HEK293 (cell line): ENCODE measurements at regions of chr1 and their contacts with region 1.

Region 1: DNA sequence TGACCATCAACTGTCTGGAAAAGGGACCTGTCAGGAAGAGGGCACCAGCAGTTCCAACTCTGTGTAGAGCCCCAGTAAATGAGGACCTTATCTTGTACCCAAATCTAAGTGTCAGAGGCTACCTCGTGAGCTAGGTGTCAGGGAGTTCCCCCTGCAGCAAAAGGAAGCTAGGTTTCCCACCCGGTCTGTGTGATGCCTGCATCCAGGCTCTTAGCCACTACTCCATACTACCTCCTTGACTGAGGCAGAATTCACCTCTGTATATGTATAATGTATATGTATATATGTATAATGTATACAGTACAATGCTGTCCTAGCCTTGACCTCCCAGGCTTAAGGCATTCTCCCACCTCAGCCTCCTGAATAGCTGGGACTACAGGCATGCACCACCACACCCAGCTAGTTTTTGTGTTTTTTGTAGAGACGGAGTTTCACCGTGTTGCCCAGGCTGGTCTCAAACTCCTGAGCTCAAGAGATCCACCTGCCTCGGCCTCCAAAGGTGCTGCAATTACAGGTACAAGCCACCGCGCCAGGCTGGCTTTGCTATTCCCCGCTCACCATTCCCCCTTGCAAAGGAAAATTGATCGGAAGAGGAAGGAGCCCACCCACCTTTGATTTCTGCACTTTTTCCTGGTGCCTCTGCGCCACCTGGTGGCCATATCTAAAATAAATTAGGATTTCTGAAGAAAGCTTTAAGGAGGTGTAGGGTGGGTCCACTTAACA is 15.7 kb upstream of the LUZP1 start:
- H3K4me3 ChIP-seq: no peak overlapping the region
- H3K27ac ChIP-seq: no peak overlapping the region
- H3K4me1 ChIP-seq: no peaks in the 10 kb centered on the region
- CTCF ChIP-seq: peak; percentile 53; the same call in 1 of the 2 replicates

Region 2: DNA sequence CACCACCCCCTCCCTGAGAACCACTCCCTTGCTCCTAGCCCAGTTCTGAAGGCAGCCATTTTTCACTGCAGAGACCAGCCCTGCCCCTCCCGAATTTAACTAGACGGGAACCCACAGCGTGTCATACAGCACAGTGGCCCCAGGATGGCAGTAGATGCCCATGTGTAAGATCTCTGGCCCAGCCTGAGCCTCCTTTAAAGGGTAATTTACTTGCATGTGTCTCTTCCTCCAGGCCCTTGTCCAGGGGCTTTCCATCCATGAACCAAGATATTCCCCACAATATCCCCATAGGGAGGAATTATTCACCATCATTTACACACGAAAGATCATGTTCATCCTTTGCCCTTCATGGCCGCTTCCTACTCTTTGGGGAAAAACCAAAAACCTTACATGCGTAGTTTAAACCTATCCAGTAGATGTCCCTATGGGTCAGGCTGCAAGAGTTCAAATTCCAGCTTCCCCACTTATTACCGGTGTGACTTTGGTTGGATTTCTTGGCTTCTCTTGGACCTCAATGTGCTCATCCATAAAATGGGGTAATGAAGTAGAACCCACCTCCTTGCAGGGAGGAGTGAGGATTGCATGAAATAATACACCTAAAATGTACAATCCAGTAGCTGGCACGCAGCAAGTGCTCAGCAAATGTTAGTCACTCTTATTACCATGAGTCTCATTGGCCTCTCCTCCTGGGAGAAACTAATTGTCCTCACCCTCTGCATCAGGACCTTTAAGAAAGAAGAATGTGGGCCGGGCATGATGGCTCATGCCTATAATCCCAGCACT is 207.7 kb before region 1 on chr1:
- CTCF ChIA-PET with region 1: interaction called, 61 read pairs
- POLR2A ChIA-PET with region 1: no interaction called
- H3K4me3 ChIP-seq: no peak overlapping the region
- H3K27ac ChIP-seq: no peak overlapping the region
- H3K4me1 ChIP-seq: no peaks in the 10 kb centered on the region
- CTCF ChIP-seq: peak; percentile 96

Region 3: DNA sequence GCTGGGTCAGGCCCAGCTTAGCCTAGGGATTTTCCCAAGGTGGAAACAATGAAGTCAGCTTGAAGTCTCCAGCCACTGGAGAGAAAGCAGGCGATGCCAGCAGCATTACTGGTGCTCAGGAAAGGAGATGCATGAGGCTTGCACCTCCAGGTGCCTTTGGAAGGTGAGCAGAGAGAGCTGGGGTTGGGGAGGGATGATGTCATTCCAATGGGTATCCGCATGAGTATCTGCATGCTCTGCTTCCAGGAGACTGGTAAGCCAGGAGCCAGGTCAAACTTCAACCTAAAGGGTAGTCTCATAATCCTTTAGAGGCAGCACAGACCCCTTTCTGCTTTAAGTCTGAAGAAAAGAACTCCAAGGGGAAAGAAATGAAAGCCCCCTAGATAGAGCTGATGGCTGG is 96.3 kb before region 1 on chr1:
- CTCF ChIA-PET with region 1: interaction called, 333 read pairs
- POLR2A ChIA-PET with region 1: no interaction called
- H3K4me3 ChIP-seq: no peak overlapping the region
- H3K27ac ChIP-seq: no peak overlapping the region
- H3K4me1 ChIP-seq: no peaks in the 10 kb centered on the region
- CTCF ChIP-seq: no peak

Region 4: DNA sequence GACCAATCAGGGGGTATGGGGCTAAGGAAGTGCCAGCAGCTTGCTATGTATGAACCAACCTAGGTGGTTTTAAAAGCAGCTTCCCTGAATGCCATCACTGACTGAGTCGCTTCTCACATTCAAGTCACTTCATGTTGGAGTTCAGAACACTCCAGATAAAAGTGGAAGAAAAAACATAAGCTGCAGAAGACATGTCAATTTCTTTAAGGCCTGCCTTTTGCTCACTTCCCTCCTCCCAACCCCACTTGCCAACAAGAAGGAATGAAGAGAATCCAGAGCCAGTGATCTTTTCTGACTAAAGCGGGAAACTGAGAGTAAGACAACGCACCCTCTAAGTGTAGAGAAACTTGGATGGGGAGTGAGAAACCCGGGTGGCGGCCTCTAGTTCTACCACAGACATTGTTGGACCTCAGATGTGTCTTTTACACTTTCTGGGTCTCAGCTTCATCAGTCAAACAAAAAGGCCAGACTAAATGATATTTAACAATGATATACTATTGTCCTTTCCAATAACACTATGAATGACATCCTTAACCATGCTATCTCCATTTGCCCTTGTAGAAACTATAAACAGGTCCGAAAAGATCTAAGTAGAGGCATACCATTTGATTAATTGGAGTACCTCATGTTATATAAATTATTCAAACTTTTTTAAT is 69.8 kb before region 1 on chr1:
- CTCF ChIA-PET with region 1: interaction called, 13 read pairs
- POLR2A ChIA-PET with region 1: no interaction called
- H3K4me3 ChIP-seq: no peak overlapping the region
- H3K27ac ChIP-seq: no peak overlapping the region
- H3K4me1 ChIP-seq: peaks cover 4% of the 10 kb centered on the region; the same call in 1 of the 2 replicates
- CTCF ChIP-seq: no peak

Region 5: DNA sequence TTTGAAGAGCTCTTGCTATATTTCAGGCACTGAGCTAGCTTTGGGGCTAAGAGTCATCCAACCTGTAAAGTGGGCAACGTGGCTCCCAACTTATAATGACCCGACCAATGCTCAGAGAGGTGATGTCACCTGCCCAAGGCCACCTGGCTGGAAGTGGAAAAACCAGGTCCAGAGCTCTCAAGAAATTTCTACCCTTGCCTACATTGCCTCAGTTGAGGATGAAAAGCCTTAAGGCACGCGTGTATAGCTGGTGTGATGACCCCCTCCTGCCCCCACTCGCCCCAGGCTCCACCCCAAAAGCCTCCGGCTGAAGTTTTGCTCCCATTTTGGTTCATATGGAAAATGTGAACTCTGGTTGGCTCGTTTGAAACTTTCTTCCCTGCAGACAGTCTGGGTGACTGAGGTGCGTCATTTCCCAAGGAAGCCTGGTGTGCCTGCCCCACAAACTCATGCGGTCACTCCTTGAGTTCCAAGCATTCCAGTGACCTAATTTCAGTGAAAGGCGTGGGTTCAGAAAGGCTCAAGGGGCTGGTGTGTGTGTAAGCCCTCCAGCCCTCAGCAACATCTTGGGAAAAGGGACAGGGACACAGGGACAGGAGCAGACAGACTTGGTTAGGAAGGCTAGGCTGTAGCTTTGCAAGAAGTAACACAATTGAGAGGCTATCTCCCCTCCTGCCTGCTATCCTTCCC is 12.4 kb after region 1 on chr1:
- CTCF ChIA-PET with region 1: interaction called, 74 read pairs
- POLR2A ChIA-PET with region 1: no interaction called
- H3K4me3 ChIP-seq: no peak overlapping the region
- H3K27ac ChIP-seq: no peak overlapping the region
- H3K4me1 ChIP-seq: no peaks in the 10 kb centered on the region
- CTCF ChIP-seq: no peak

Region 6: GRCh38 chr1:23216771-23217420 is 32.5 kb after region 1 on chr1:
- CTCF ChIA-PET with region 1: interaction called, 13 read pairs
- POLR2A ChIA-PET with region 1: no interaction called
- H3K4me3 ChIP-seq: peak overlapping the region; percentile 51
- H3K27ac ChIP-seq: no peak overlapping the region; the same call in 1 of the 2 replicates
- H3K4me1 ChIP-seq: no peaks in the 10 kb centered on the region
- CTCF ChIP-seq: 0 out of 2 replicates have a peak, but pooled peaks have one; percentile 11

Region 7: DNA sequence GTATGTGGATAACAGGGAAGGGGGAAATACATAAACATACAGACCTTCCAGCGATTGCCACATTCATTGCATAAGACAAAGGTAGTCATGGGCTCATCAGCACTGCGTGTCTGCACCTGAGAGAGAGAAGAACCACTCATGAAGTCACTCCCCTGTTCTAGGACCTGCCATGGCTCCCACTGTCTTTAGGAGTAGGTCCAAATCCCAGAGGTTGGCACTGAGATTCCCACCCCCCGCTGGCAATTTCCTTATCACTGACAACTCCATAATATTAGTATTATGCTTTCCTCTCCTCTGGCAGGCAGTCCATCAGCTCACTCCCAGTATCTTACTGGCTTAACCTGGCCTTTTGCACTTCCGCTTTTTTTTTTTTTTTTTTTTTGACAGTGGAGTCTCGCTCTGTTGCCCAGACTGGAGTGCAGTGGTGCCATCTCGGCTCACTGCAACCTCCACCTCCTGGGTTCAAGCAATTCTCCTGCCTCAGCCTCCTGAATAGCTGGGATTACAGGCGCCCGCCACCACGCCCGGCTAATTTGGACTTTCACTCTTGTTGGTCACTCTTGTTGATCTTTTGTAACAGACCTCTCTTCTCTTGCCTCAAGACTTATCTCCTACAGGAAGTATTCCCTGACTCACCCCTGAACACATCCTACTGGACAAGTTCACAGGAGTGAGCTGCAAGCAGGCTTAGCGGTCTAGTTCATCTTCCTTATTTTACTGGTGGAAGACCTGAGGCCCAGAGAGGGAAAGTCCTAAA is 200.1 kb after region 1 on chr1:
- CTCF ChIA-PET with region 1: no interaction called
- POLR2A ChIA-PET with region 1: no interaction called
- H3K4me3 ChIP-seq: no peak overlapping the region
- H3K27ac ChIP-seq: no peak overlapping the region
- H3K4me1 ChIP-seq: no peaks in the 10 kb centered on the region
- CTCF ChIP-seq: no peak